Colonic mucosa (tissue), 4 donors: ENCODE measurements at regions of chr17 and their contacts with region 1.

Region 1: DNA sequence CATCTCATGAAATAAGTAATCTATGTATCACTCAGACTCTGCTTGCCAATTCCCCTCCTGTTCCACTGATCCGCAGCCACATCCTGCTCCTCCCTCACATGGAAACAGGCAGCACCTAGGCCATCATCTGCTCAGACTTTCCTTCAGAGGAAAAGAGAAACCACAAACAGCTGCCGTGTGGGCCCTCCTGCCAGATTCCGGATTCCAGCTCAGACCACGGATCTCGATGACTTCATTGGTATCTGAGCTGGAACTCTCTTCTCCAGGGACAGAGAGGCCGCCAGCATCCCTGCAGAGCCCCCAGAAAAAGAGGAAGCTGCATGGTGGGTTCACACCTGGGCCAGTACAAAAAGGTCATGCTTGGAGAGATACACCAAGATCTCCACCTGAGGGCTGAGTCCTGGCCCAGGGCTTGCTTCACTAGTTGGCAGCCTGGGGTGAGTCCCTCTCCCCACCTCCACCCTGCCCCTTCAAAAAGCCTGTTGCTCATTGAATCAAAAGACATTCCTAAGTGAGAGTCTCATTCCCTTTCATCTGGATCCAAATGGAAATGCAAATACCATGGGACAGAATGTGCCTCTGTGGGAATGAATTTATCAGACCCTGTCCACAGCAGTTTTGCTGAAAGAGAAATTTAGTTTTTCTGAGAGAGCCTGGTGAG is 47.2 kb downstream of the HOXB1 start:
- DNase-seq: no peak
- H3K4me3 ChIP-seq: no peak overlapping the region
- H3K27ac ChIP-seq: no peak overlapping the region
- H3K4me1 ChIP-seq: peaks cover 3% of the 10 kb centered on the region
- H3K27me3 ChIP-seq: no peaks in the 10 kb centered on the region
- CTCF ChIP-seq: no peak

Region 2: GRCh38 chr17:48351831-48352332 is 131.7 kb before region 1 on chr17:
- intact Hi-C with region 1: loop called (anchors 10 kb)
- DNase-seq: no peak
- H3K4me3 ChIP-seq: no peak overlapping the region
- H3K27ac ChIP-seq: no peak overlapping the region
- H3K4me1 ChIP-seq: no peaks in the 10 kb centered on the region
- H3K27me3 ChIP-seq: no peaks in the 10 kb centered on the region
- CTCF ChIP-seq: peak; percentile 61

Region 3: GRCh38 chr17:48406936-48407567 is 76.5 kb before region 1 on chr17:
- intact Hi-C with region 1: loop called (anchors 5 kb)
- DNase-seq: no peak
- H3K4me3 ChIP-seq: no peak overlapping the region
- H3K27ac ChIP-seq: no peak overlapping the region
- H3K4me1 ChIP-seq: no peaks in the 10 kb centered on the region
- H3K27me3 ChIP-seq: no peaks in the 10 kb centered on the region
- CTCF ChIP-seq: no peak